AG04449 (cell line): ENCODE measurements at regions of chr15 and their contacts with region 1.

Region 1: GRCh38 chr15:79184465-79184892 is 93.9 kb upstream of the RASGRF1 start:
- DNase-seq: no peak
- H3K4me3 ChIP-seq: no peak overlapping the region
- CTCF ChIP-seq: peak; percentile 89

Region 2: GRCh38 chr15:78909791-78910228 is 274.7 kb before region 1 on chr15:
- CTCF ChIA-PET with region 1: interaction called, 67 read pairs
- POLR2A ChIA-PET with region 1: no interaction called
- DNase-seq: no peak
- H3K4me3 ChIP-seq: no peak overlapping the region
- CTCF ChIP-seq: peak; percentile 59

Region 3: GRCh38 chr15:79018960-79019359 is 165.5 kb before region 1 on chr15:
- CTCF ChIA-PET with region 1: interaction called, 15 read pairs
- POLR2A ChIA-PET with region 1: no interaction called
- DNase-seq: no peak
- H3K4me3 ChIP-seq: no peak overlapping the region
- CTCF ChIP-seq: no peak

Region 4: DNA sequence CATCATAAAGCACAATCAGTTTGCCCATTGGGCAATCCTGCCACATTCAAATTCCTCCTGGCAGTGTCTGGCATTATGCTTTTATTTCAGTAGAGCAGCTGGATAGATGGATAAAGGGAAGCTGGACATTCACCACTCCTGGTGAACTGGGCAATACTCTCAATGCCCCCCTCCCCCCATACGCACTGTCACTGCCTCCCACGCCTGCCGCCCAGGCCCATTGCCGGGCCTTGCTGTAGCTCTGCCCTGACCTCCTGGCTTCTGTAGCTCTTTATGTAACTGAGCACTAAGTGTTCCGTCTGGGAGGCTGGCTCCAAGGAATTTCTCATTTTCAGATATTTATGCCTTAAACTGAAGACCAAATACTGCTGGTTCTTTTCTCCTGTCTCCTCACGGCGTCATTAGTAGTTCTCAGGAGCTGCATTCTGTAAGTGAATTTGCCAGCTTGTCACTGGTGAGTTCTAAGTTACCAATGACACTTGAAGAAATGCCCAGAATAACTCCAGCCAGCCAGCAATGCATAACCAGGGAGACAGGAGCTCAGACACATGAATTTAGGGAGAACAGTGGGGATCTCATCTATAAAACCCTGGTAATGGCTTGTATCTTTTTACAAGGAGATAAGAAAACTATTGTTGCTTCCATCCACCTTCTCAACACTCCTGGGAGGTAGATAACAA is 68.4 kb before region 1 on chr15:
- CTCF ChIA-PET with region 1: interaction called, 11 read pairs
- POLR2A ChIA-PET with region 1: no interaction called
- DNase-seq: no peak
- H3K4me3 ChIP-seq: no peak overlapping the region
- CTCF ChIP-seq: no peak

Region 5: GRCh38 chr15:79208179-79208578 is 23.7 kb after region 1 on chr15:
- CTCF ChIA-PET with region 1: interaction called, 32 read pairs
- POLR2A ChIA-PET with region 1: no interaction called
- DNase-seq: no peak
- H3K4me3 ChIP-seq: no peak overlapping the region
- CTCF ChIP-seq: no peak

Region 6: DNA sequence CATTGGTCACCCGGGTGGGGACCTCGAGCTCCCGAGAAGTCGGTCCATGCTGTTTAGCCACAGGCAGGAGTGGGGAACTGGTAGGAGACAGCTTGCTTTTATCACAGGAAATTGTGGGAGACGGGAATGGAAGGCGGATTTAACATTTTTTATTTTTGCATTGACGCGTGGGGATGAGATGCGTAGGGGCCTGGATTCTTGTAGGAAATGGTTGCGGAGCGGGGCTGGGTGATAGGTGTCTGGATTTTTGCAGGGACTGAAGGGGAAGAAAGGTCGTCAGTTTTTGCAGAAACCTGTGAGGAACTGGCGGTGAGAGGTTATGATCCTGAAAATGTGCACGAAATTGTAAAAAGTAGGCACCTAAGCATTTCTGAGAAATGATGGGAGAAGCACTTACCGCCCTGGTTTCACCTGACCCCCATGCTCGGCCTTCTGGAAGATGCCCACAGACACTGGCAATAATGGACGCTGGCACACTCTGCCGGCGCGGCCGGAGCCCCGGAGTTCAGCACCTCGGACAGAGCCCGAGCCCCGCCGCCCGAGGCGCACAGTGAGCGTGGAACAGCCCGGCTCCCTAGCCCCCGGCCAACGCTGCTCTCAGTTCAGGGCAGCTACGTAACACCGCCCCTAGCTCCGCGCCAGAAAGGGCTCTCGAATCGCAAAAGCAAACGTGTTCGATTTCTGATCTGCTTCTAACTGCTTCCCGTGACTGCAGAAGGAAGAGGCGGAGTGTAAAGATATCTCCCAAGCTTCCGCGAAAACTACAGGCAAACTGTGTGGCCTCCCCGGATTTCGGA is 99.0 kb after region 1 on chr15:
- CTCF ChIA-PET with region 1: no interaction called
- POLR2A ChIA-PET with region 1: no interaction called
- DNase-seq: no peak
- H3K4me3 ChIP-seq: no peak overlapping the region
- CTCF ChIP-seq: no peak